ENCODE measurements at regions of chr15 and their contacts with region 1.

Region 1: GRCh38 chr15:66946578-66947164 is 118.7 kb upstream of the SMAD3 start:
- DNase-seq: peak; percentile 60
- H3K4me3 ChIP-seq: no peak overlapping the region
- H3K27ac ChIP-seq: no peak overlapping the region
- H3K4me1 ChIP-seq: no peaks in the 10 kb centered on the region
- H3K27me3 ChIP-seq: no peaks in the 10 kb centered on the region
- CTCF ChIP-seq: peak; percentile 86 to 95 (median 92)
- POLR2A ChIP-seq: no peak

Region 2: GRCh38 chr15:67303490-67304363 is 357.1 kb after region 1 on chr15:
- intact Hi-C with region 1: loop called (anchors 1 kb)
- DNase-seq: peak; percentile 28
- H3K4me3 ChIP-seq: no peak overlapping the region
- H3K27ac ChIP-seq: no peak overlapping the region
- H3K4me1 ChIP-seq: no peaks in the 10 kb centered on the region
- H3K27me3 ChIP-seq: no peaks in the 10 kb centered on the region
- CTCF ChIP-seq: peak; percentile 18 to 83 (median 68)
- POLR2A ChIP-seq: no peak

Region 3: DNA sequence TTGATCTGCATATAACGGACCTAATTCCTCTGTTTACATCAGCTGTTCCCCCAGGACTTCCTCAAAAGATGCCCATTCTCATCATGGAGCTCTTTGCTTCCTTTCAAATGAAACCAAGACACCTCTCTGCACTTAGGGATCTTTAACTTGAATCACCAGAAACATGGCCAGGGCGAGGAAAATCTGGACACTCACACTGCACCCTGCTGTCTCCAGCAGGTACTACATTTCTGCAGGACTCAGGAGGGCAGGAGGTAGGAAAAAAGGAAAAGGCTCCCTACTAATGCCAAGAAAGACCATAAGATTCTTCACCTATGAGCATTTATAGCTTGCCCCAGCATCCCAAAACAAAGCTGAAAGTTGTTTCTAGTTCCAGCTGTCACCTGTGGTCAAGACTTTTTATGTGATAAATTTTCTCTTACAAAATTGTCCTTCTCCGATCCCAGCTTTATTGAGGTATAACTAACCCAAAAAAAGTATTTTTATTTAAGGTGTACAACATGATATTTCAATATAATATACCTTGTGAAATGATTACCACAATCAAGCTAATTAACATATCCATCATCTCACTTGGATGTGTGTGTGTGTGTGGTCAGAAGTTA is 486.9 kb after region 1 on chr15:
- intact Hi-C with region 1: loop called (anchors 5 kb)
- DNase-seq: peak; percentile 10
- H3K4me3 ChIP-seq: no peak overlapping the region
- H3K27ac ChIP-seq: no peak overlapping the region
- H3K4me1 ChIP-seq: no peaks in the 10 kb centered on the region
- H3K27me3 ChIP-seq: no peaks in the 10 kb centered on the region
- CTCF ChIP-seq: peak in 3 of 4 experiments; percentile 47 to 65 (median 62)
- POLR2A ChIP-seq: no peak

Measured in prostate gland (tissue), 2 donors.